B cell (primary cell): ENCODE measurements at regions of chr3 and their contacts with region 1.

Region 1: DNA sequence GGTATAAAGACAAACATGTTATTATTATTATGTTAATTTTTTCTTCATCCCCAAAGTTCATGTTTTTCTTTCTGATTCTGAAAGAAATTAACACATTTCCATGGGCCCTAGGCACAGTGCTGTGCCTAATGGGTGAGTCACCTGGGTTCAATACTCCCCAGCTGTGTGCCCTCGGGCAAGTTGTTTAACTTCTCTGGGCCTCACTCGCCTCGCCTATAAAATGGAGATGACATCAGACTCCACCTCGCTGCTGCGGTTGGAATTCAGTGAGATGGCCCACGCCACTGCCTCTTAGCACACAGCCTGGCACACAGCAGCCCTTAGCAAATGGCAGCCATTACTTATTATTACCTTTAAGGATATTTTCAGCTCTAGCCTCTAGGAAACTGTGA is 22.6 kb downstream of the DNASE1L3 start:
- DNase-seq: no peak
- ATAC-seq: no peak
- H3K4me3 ChIP-seq: no peak overlapping the region
- H3K4me3 Mint-ChIP-seq: no peak overlapping the region
- H3K27ac ChIP-seq: no peak overlapping the region
- H3K27ac Mint-ChIP-seq: no peak overlapping the region
- H3K4me1 ChIP-seq: peaks cover 0 to 5% of the 10 kb centered on the region in 2 donors
- H3K4me1 Mint-ChIP-seq: peaks cover 3% of the 10 kb centered on the region
- H3K27me3 ChIP-seq: no peaks in the 10 kb centered on the region
- H3K27me3 Mint-ChIP-seq: no peaks in the 10 kb centered on the region
- CTCF ChIP-seq: no peak

Region 2: GRCh38 chr3:58206406-58207011 is 18.3 kb after region 1 on chr3:
- CTCF ChIA-PET with region 1: interaction called, 336 read pairs
- POLR2A ChIA-PET with region 1: no interaction called
- intact Hi-C with region 1: no loop called
- DNase-seq: no peak
- ATAC-seq: no peak
- H3K4me3 ChIP-seq: no peak overlapping the region
- H3K4me3 Mint-ChIP-seq: no peak overlapping the region
- H3K27ac ChIP-seq: no peak overlapping the region
- H3K27ac Mint-ChIP-seq: no peak overlapping the region
- H3K4me1 ChIP-seq: peaks cover 23 to 27% of the 10 kb centered on the region in 2 donors
- H3K4me1 Mint-ChIP-seq: peaks cover 30% of the 10 kb centered on the region
- H3K27me3 ChIP-seq: no peaks in the 10 kb centered on the region
- H3K27me3 Mint-ChIP-seq: no peaks in the 10 kb centered on the region
- CTCF ChIP-seq: no peak

Region 3: DNA sequence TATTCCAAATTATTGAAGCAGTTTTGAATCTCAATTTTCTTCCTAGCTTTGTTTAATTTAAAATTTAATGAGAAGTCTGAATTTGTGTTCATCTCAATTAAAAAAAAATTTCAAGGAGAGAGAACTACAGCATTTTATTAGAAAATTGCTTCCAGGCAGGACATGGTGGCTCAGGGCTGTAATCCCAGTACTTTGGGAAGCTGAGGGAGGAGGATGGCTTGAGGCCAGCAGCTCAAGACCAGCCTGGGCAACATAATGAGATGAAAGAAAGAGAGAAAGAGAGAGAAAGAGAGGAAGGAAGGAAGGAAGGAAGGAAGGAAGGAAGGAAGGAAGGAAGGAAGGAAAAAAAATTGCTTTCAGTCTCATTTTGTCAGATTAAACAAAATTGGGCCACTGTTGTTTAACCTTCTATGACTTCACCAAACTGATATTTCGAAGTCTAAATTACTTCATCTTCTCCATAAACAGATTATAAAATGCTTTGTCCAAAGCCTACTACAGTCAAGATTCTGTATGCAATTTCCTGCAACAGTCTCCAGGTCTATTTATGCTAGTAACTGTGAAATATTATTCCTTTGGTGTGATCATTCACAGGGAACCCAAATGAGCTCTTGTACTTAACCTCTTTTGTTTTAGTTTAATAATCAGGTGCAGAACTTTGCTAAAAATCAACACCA is 42.8 kb after region 1 on chr3:
- CTCF ChIA-PET with region 1: interaction called, 29 read pairs
- POLR2A ChIA-PET with region 1: no interaction called
- intact Hi-C with region 1: no loop called
- DNase-seq: no peak
- ATAC-seq: no peak
- H3K4me3 ChIP-seq: no peak overlapping the region
- H3K4me3 Mint-ChIP-seq: no peak overlapping the region
- H3K27ac ChIP-seq: no peak overlapping the region
- H3K27ac Mint-ChIP-seq: peak overlapping the region; percentile 22
- H3K4me1 ChIP-seq: peaks cover 37 to 39% of the 10 kb centered on the region in 2 donors
- H3K4me1 Mint-ChIP-seq: peaks cover 44% of the 10 kb centered on the region
- H3K27me3 ChIP-seq: no peaks in the 10 kb centered on the region
- H3K27me3 Mint-ChIP-seq: no peaks in the 10 kb centered on the region
- CTCF ChIP-seq: no peak

Region 4: DNA sequence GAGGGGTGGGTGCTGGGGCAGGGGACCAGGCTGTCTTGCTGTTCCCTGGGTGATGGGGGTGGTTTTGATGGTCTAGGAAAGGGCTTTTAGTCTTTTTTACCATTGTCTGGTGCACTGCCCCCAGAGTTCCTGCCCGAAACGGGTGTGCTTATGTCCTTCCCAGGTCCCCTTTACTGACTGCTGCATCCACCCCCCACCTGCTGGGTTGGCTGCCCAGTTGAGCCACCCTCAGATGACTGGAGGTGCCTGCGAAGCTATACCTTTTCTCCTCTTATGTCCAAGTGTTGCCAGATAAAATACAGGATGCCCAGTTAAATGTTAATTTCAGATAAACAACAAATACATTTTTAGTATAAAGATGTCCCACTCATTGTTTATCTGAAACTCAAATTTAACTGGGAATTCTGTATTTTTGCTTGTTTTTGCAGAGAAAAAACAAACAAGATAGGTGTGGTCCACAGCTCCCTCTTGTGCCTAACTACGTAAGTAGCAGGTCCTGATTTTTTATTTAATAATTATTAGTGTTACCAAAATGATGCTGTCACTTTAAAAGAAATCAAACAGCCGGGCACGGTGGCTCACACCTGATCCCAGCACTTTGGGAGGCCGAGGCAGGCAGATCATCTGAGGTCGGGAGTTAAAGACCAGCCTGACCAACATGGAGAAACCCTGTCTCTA is 111.8 kb after region 1 on chr3:
- CTCF ChIA-PET with region 1: interaction called, 334 read pairs
- POLR2A ChIA-PET with region 1: interaction called, 10 read pairs
- intact Hi-C with region 1: loop called (anchors 1 kb)
- DNase-seq: peak; percentile 50
- ATAC-seq: no peak
- H3K4me3 ChIP-seq: no peak overlapping the region
- H3K4me3 Mint-ChIP-seq: no peak overlapping the region
- H3K27ac ChIP-seq: no peak overlapping the region
- H3K27ac Mint-ChIP-seq: no peak overlapping the region
- H3K4me1 ChIP-seq: no peaks in the 10 kb centered on the region
- H3K4me1 Mint-ChIP-seq: no peaks in the 10 kb centered on the region
- H3K27me3 ChIP-seq: no peaks in the 10 kb centered on the region
- H3K27me3 Mint-ChIP-seq: no peaks in the 10 kb centered on the region
- CTCF ChIP-seq: peak; percentile 65

Region 5: DNA sequence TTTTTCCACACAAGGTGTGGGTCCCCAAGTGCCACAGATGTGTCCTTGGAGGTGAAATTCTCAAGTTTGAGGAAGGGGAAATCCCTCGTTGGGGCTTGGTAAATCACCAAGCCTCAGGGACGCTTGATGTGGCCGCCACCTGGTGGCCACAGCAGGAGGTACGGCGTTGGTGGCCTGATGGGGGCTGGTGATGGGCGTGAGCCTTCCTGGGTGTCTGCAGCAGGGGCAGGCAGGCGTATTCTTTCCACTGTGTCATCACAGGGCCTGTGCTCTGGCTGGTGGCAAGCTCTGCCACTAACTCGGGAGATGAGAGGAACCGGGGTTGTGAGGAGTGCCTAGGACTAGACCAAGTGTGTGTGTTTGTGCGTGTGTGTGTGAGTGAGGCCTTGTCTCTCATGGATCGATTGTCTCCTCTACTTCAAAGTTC is 344.6 kb after region 1 on chr3:
- CTCF ChIA-PET with region 1: interaction called, 4 read pairs
- POLR2A ChIA-PET with region 1: no interaction called
- intact Hi-C with region 1: loop called (anchors 1 kb)
- DNase-seq: peak; percentile 89
- ATAC-seq: peak; percentile 99
- H3K4me3 ChIP-seq: no peak overlapping the region
- H3K4me3 Mint-ChIP-seq: no peak overlapping the region
- H3K27ac ChIP-seq: no peak overlapping the region
- H3K27ac Mint-ChIP-seq: peak overlapping the region; percentile 7
- H3K4me1 ChIP-seq: peaks cover 6 to 8% of the 10 kb centered on the region in 2 donors
- H3K4me1 Mint-ChIP-seq: peaks cover 6% of the 10 kb centered on the region
- H3K27me3 ChIP-seq: no peaks in the 10 kb centered on the region
- H3K27me3 Mint-ChIP-seq: no peaks in the 10 kb centered on the region
- CTCF ChIP-seq: peak; percentile 91